Right lobe of liver (tissue), 6 donors: ENCODE measurements at regions of chr2 and their contacts with region 1.

Region 1: GRCh38 chr2:59296279-59296678 is 1055.2 kb upstream of the FANCL start:
- DNase-seq: no peak
- ATAC-seq: no peak
- H3K4me3 ChIP-seq: no peak overlapping the region
- H3K27ac ChIP-seq: no peak overlapping the region
- H3K4me1 ChIP-seq: no peaks in the 10 kb centered on the region
- H3K27me3 ChIP-seq: no peaks in the 10 kb centered on the region
- CTCF ChIP-seq: no peak
- POLR2A ChIP-seq: no peak

Region 2: GRCh38 chr2:59019566-59020159 is 276.6 kb before region 1 on chr2:
- intact Hi-C with region 1: no loop called
- DNase-seq: no peak
- ATAC-seq: no peak
- H3K4me3 ChIP-seq: no peak overlapping the region
- H3K27ac ChIP-seq: no peak overlapping the region
- H3K4me1 ChIP-seq: no peaks in the 10 kb centered on the region
- H3K27me3 ChIP-seq: no peaks in the 10 kb centered on the region
- CTCF ChIP-seq: no peak
- POLR2A ChIP-seq: no peak

Region 3: DNA sequence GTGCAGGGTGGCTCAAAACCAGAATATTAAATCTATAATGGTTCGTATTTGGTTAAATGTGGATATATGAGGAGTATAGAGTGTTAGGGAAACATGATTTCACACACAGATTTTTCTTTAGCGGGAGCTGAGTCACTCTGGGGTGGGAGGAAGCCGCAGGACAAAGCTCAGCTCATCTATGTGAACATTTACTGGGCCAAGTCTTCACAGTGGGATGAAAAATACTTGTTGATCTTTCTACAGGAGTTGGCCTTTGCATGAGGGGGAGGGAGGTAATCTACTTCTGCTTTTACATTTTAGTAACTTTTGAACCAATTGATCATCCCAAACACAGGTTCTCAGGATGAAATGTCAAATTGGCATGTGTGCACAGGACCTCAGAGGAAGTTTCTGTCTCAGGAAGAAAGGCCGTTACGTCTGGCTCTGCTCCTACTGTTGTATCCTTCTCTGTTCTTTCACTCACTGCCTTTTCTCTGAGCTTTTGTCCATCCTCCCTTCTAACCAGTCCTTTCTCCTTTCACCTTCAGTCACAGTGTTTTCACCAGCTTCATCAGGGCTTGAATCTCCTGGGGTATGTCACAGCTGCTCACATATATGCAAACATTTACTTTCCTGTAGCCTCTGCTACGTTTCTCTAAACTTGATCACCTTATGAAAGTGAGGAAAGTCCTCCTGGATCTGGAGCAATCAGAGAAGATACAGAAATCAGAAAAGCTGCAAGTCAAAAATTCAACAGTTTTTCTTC is 111.8 kb before region 1 on chr2:
- intact Hi-C with region 1: no loop called
- DNase-seq: no peak
- ATAC-seq: no peak
- H3K4me3 ChIP-seq: no peak overlapping the region
- H3K27ac ChIP-seq: no peak overlapping the region
- H3K4me1 ChIP-seq: no peaks in the 10 kb centered on the region
- H3K27me3 ChIP-seq: no peaks in the 10 kb centered on the region
- CTCF ChIP-seq: no peak
- POLR2A ChIP-seq: no peak

Region 4: DNA sequence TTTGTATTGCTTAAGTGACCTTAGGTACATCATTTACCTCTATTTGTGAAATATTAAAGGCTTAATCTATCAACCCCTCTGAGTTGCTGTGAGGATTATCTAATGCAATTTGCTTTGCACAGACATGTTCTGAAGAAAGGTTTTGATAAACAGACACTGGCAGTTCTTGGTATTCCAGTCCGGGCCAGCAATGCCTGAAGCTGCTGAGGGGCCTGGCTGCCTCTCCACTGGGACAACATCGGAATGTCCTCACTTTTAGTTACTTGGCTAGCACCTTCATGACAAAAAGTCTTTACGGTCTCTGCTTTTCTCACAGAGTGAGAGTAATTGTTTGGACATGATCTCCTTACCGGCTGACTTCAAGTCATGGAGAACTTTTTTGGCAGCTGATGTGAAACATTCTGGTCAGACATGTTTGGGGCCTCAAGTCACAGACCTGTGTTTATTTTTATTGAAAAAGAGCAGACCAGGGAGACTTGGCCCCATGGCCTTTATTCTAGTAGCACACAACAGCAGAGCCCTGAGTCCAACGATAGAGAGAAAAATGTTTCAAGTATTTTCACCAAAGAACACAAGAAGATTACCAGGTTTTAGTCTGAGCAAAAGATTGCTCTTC is 57.1 kb after region 1 on chr2:
- intact Hi-C with region 1: no loop called
- DNase-seq: no peak
- ATAC-seq: no peak
- H3K4me3 ChIP-seq: no peak overlapping the region
- H3K27ac ChIP-seq: no peak overlapping the region
- H3K4me1 ChIP-seq: no peaks in the 10 kb centered on the region
- H3K27me3 ChIP-seq: no peaks in the 10 kb centered on the region
- CTCF ChIP-seq: no peak
- POLR2A ChIP-seq: no peak

Region 5: DNA sequence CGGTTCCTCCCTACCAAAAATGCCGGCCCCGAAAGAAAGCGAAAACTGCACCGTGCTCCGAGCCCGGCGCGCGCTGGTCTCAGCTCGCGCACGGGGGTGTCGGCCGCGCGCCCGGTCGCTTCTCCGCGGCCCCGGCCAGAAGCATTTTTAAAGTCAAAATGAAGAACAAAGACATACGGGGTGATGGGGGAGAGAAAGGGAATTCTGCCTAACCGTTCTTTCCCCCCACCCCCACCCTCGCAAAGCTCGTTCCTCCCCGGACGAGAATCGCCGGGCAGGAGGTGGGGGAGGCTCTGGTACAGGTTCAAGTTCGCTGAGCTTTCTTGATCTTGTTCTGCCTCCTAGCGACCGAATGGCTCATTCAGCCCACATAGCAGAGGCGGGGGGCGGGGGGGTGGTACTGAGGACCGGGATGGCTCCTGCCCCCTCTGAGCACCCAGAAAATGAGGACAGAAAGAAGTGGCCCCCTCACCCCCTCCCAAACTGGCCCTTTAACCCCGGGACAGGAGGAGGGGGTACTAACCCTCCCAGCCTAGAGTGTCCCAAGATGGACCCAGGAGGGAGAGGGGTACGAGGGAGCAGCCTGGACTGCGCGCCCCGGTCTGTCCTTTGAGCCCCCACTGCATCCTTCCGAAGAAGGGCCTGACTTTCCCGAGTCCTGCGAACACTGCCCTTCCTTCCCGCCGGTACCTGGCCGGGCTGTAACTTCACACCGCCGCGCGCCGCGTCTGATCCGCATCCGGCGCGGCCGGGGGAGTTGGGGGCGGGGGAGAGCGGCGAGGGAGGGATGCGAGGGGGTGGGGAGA is 1254.1 kb after region 1 on chr2:
- intact Hi-C with region 1: loop called in 1 of 2 experiments (anchors 10 kb)
- DNase-seq: peak; percentile 68 to 75 (median 72)
- ATAC-seq: peak; percentile 80 to 90 (median 83)
- H3K4me3 ChIP-seq: peak overlapping the region; percentile 59 to 69 (median 65)
- H3K27ac ChIP-seq: peak overlapping the region in 1 of 3 donors; percentile 9
- H3K4me1 ChIP-seq: peaks cover 0 to 44% (median 9%) of the 10 kb centered on the region in 4 donors
- H3K27me3 ChIP-seq: peaks cover 5 to 20% of the 10 kb centered on the region in 2 donors
- CTCF ChIP-seq: peak; percentile 57 to 62 (median 59)
- POLR2A ChIP-seq: no peak